ENCODE measurements at regions of chr1 and their contacts with region 1.

Region 1: GRCh38 chr1:61077676-61078541 is 4.5 kb upstream of the NFIA start:
- DNase-seq: peak; percentile 99
- H3K4me3 ChIP-seq: peak overlapping the region in 6 of 7 experiments; percentile 77 to 99 (median 84)
- H3K27ac ChIP-seq: peak overlapping the region; percentile 37 to 87
- H3K4me1 ChIP-seq: peaks cover 24 to 59% (median 46%) of the 10 kb centered on the region in 4 experiments
- H3K27me3 ChIP-seq: peaks cover 0 to 4% (median 0%) of the 10 kb centered on the region in 5 experiments

Region 2: DNA sequence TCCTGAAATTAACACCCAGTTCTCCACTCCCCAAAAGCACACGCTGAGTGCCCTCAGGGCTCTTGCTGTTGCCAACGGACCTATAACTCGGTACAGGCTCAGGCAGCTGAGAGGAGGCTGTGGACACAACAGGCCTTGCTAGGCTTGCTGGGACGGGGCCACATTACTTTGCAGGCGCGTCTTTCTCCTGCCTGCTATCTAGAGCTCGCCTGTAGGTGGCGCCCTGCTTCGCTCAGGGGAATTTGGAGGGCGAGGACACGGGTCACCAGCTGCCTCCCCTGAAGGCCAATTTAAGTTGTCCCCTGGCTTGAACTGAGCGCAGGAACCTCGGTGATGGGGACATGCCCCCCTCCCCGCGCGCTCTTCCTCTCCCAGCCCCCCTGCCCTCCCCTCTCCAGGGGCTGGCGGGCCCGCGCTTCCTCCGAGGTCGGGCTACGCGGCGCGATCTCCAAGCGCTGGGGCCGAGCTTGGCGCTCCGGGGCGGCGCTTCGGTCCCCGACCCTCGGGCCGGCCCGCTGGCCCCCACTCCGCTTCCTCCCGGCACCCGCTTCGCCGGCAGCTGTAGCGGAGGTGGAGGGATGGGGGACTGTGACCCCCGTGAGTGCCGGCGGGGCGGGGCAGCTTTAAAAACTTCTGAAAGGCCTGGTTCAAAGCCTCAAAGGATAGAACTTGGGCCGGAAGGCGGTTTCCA is 27.9 kb before region 1 on chr1:
- CTCF ChIA-PET with region 1: interaction called, 36 read pairs
- POLR2A ChIA-PET with region 1: interaction called, 14 read pairs
- DNase-seq: peak; percentile 95 to 99 (median 98)
- H3K4me3 ChIP-seq: peak overlapping the region; percentile 55 to 91 (median 75)
- H3K27ac ChIP-seq: peak overlapping the region; percentile 58 to 81
- H3K4me1 ChIP-seq: peaks cover 14 to 46% (median 42%) of the 10 kb centered on the region in 4 experiments
- H3K27me3 ChIP-seq: peaks cover 0 to 13% (median 0%) of the 10 kb centered on the region in 5 experiments

Region 3: GRCh38 chr1:61056573-61057439 is 21.1 kb before region 1 on chr1:
- CTCF ChIA-PET with region 1: interaction called, 14 read pairs
- POLR2A ChIA-PET with region 1: interaction called, 5 read pairs
- DNase-seq: peak; percentile 50 to 79 (median 69)
- H3K4me3 ChIP-seq: peak overlapping the region; percentile 64 to 98 (median 83)
- H3K27ac ChIP-seq: peak overlapping the region in 1 of 2 experiments; percentile 54
- H3K4me1 ChIP-seq: peaks cover 14 to 40% (median 32%) of the 10 kb centered on the region in 4 experiments
- H3K27me3 ChIP-seq: peaks cover 0 to 11% (median 0%) of the 10 kb centered on the region in 5 experiments